Right ventricle myocardium inferior (tissue), 1 donor: ENCODE measurements at regions of chr4 and their contacts with region 1.

Region 1: GRCh38 chr4:25312496-25313200 is at the start of gene ZCCHC4:
- DNase-seq: peak; percentile 94
- ATAC-seq: peak; percentile 98
- total RNA-seq, gene ZCCHC4: 9.3 TPM

Region 2: DNA sequence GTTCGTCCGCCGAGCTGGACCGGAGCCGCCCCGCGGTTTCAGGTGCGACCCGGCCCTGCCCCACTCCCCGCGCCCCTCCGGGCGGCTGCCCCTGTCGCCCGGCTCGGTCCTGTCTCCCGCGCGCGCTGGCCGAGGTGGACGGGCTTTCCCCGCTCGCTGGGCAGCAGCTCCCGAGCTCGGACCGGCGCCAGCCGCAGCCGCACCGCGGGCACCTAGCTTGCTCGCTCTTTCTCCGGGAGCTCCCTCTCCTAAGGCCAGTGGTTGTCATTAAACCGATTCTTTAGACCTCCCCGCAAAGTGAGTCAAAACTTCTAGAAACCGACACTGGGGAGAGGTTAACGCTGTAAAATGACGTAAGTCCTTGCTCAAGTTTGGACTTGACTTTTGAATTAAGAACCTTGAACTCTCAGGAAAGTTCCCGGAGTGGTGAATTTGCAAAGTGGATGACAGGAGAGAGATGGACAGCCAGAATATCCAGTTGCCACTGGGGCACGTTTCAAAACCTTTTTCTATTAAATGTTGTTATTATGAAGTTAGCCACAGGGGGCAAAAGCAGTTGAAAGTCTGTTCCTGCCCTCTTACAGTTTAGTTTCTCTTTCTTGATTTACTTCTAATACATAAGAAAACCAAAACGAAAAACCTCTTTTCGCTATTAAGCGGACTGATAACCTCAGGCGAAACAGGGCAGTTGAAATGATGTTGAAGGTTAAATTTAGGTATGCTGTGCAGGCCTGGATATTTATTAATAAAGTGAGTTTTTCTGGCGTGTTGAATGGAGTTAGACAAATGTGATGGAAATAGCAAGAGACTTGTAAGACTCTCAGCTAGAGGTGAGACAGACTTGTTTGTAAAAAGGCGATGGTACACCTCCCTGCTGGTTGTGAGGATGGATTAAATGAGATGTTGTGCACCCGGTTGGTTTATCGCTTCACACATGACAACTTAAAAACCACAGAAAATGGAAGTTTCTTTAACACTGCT is 78.0 kb before region 1 on chr4:
- intact Hi-C with region 1: loop called (anchors 5 kb)
- DNase-seq: peak; percentile 62
- ATAC-seq: peak; percentile 73

Region 3: DNA sequence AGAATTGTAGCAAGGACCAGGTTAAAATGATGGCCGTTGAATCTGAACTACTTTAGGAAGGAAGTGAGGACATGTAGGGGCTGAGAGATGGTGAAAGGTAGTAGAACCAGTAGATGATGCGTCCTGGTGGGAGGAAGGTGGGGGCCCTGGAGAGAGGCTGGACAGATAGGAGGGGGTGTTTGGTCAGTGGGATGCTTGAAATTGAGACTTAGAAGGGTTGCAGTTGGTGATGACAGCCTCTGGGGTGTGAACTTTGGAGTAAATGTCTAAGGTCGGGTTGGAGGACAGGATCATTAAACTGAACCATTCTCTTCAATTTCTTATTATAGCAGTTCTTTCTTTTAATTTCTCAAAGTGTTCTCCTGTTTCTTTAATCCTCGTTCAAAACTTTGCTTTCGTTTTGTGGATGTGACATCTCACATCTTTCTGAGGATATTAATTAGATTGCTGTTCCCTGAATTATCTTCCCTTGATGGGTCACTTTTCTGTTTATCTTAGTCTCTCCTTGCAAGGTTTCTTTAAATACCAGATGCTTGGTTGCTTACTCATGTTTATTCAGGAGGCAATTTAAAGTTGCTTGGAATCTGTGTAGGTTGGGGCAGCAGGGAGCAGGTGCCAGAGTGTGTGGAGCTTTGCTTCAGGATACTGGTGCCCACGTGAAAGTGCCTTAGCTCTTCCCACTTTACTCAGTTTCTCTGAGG is 88.2 kb after region 1 on chr4:
- intact Hi-C with region 1: no loop called
- DNase-seq: no peak
- ATAC-seq: no peak